SK-N-SH (cell line): ENCODE measurements at regions of chr2 and their contacts with region 1.

Region 1: DNA sequence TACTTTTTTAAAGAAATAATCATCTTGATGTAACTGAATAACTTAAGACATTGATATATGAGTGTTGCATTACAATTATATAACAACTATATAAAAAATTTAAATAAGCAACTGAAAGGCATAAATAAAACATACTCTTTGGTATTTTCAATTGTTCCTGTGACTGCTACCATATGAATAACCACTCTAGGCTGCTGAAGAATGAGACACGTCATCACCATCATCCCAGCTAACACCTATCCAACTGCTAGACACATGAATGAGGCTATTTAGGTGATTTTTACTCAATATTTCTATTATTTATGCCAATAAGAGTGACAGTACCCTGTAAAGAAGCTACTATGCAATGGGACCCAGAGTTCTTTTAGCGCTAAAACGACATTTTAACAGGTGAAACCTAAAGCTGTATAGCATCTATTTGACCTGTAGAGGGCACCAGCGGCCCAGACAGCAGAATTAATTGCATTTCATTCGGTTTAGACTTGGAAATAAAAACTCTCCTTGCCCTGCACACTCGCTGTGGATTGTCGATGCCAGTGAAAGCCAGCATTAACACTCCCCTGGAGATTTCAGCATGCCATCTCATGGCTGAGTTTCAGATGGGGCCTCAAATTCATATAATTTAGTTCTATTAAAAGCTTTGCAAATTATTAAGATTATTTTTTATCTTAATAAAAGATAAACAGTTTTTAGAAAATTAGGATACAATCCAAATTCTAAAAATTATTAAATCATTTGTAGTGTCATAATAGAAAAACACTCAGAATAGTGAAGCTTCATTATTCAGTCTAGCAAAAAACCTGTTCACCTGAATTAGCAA is 89.4 kb upstream of the MAP2 start:
- DNase-seq: peak; percentile 56
- H3K4me3 ChIP-seq: peak overlapping the region in 1 of 2 experiments; percentile 42; a peak in 1 of 4 replicates
- H3K27ac ChIP-seq: no peak overlapping the region
- H3K4me1 ChIP-seq: no peaks in the 10 kb centered on the region
- H3K27me3 ChIP-seq: no peaks in the 10 kb centered on the region
- CTCF ChIP-seq: peak; percentile 94
- EP300 ChIP-seq: no peak
- RAD21 ChIP-seq: peak; percentile 96

Region 2: DNA sequence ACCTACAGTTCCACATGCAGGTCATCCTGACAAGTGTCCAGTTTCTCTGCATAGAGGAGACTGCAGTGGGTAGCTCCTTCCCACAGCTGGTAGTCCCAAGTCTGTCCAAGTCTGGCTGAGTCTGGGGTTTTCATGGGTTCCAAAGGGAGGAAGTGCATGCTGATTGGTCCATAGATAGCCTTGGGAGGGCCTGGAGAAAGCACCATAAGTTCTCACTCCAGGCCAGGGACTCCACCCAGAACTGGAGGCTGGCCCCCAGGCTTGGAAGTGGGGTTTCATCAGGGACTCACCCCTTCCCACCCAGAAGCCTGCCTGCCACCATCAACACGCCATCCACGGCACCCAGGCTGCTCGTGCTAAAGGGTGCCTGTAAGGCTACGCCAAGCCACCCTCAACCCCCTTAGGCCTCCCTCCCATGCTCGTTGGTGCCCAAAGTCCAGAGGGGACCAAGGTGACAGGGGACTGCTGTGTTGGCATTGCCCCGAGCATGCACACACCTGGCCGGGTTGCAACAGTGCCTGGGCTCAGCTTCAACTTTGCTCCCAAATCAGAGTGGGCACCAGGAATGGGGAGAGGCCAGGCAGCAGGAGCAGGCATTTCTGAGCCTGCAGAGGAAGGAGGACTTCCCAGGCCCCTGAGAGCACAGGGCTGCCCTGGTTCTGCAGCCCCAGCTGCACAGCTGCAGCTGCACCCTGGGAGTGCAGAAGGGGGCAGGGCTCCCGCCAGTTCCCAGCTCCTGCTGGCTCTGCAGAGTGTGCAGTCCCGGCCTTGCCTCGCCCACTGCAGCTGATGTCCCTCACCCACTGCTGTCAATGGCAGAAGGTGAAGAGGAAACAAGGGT is 27.0 kb before region 1 on chr2:
- CTCF ChIA-PET with region 1: interaction called, 13 read pairs
- POLR2A ChIA-PET with region 1: no interaction called
- DNase-seq: no peak
- H3K4me3 ChIP-seq: no peak overlapping the region
- H3K27ac ChIP-seq: no peak overlapping the region
- H3K4me1 ChIP-seq: no peaks in the 10 kb centered on the region
- H3K27me3 ChIP-seq: no peaks in the 10 kb centered on the region
- CTCF ChIP-seq: no peak
- EP300 ChIP-seq: no peak
- RAD21 ChIP-seq: no peak

Region 3: DNA sequence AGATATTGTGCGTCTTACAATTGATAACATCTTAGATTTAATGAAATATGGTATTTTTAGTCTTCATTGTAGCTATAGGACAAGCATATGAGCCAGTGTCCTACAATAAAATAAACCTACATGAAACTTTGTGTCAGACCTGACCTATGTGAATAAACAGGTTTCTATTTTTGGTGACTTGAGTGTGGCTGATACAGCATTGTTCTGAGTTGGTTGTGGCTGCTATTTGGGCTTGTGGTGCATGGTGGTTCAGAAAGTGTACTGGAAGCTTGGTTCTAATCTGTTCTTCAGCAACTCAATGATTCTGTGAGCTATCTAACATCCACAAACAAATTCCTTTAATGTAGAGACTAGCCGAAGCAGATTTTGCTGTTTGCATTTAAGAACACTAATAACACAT is 24.6 kb after region 1 on chr2:
- CTCF ChIA-PET with region 1: interaction called, 12 read pairs
- POLR2A ChIA-PET with region 1: no interaction called
- DNase-seq: no peak
- H3K4me3 ChIP-seq: no peak overlapping the region
- H3K27ac ChIP-seq: no peak overlapping the region
- H3K4me1 ChIP-seq: no peaks in the 10 kb centered on the region
- H3K27me3 ChIP-seq: no peaks in the 10 kb centered on the region
- CTCF ChIP-seq: no peak
- EP300 ChIP-seq: no peak
- RAD21 ChIP-seq: no peak

Region 4: DNA sequence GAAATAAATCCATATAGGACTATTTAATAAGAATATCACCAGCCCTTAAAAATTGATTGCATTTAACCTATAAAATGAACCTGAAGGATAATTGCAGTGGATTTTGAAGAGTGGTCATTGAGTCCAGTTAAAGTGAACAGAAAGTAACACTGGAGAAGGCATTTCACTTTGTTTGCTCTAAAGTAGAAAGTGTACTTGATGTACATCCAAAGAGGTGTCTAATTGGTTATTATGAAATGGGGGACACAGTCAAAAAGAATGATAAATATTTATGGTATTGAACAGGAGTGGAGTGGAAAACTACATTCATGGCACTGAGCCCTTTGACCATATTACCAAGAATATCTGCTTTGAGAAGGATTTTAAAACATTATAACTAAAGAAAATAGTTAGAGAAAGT is 61.2 kb after region 1 on chr2:
- CTCF ChIA-PET with region 1: no interaction called
- POLR2A ChIA-PET with region 1: no interaction called
- DNase-seq: no peak
- H3K4me3 ChIP-seq: no peak overlapping the region
- H3K27ac ChIP-seq: no peak overlapping the region
- H3K4me1 ChIP-seq: peaks cover 0 to 13% of the 10 kb centered on the region in 2 experiments; a peak in 1 of 4 replicates
- H3K27me3 ChIP-seq: no peaks in the 10 kb centered on the region
- CTCF ChIP-seq: no peak
- EP300 ChIP-seq: no peak
- RAD21 ChIP-seq: no peak

Region 5: DNA sequence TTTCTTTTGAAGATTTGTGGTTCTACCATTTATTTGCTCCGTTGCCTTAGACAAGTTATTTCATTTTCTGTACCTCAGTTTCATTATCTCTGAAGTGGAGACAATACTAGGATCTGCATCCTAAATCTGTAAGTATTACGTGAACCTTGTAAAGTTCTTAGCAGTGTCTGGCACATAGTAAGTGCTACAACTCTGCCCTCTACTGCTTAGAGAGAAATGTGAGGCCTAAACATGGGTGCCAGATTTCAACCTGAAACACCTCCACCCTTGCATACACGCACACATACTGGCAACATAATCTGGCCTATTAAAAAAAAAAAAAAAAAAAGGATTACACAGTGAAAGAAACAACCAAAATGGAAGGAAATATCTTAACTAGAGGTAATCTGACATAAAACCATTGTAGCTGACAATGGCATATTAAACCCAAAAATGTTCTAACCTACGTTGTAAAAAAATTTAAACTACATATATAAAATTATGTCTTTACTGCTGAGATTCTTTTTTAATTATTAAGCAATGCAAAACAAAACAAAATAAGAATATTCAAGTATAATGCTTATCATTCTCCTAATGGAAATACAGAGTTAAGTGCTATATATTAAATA is 222.1 kb after region 1 on chr2:
- CTCF ChIA-PET with region 1: interaction called, 14 read pairs
- POLR2A ChIA-PET with region 1: no interaction called
- DNase-seq: peak; percentile 27
- H3K4me3 ChIP-seq: no peak overlapping the region
- H3K27ac ChIP-seq: no peak overlapping the region
- H3K4me1 ChIP-seq: no peaks in the 10 kb centered on the region
- H3K27me3 ChIP-seq: no peaks in the 10 kb centered on the region
- CTCF ChIP-seq: peak; percentile 72
- EP300 ChIP-seq: no peak
- RAD21 ChIP-seq: peak; percentile 77

Region 6: DNA sequence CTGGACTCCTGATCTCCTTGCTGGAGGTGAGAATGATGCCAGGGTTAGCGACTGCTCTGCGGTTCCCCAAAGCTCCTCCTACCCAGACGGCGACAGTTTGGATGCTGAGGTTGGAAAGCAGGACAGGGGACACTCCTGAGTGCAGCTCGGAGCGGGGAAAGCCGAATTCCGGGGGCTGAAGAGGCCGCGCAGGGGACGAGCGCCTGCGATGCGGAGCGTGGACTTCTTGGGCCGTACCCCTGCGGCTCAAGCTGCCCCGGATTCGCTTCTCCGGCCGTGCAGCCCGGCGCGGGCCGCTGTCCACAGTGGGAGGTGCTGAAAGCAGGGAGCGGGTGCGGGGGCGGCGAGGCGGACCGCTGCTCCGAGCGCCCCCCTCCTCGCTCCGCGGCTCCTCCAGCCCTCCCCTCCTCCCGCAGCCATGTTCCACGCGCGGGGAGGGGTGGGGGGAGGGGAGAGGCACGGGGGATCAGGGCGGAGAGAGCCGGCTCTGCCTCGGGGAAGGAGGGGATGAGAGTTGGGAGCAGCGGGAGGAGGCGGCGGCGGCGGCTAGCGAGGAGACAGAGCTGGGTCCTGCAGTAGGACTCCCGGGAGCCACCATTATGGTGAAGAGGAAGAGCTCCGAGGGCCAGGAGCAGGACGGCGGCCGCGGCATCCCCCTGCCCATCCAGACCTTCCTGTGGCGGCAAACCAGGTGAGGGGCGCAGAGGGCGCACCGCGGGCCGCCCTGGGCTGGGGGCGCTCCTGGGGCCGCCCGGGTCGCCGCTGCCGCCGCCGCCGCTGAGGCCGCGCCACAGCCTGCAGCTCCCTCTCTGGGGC is 437.3 kb after region 1 on chr2 and contains the start of gene UNC80:
- CTCF ChIA-PET with region 1: interaction called, 11 read pairs
- POLR2A ChIA-PET with region 1: no interaction called
- DNase-seq: peak; percentile 95
- H3K4me3 ChIP-seq: peak within 1 kb of the TSS; percentile 60 to 63
- H3K27ac ChIP-seq: peak within 1 kb of the TSS in 1 of 2 experiments; percentile 85; a peak in 2 of 4 replicates
- H3K4me1 ChIP-seq: peaks cover 0 to 5% of the 10 kb centered on the region in 2 experiments; a peak in 2 of 4 replicates
- H3K27me3 ChIP-seq: no peaks in the 10 kb centered on the region; the same call in 1 of the 2 replicates
- CTCF ChIP-seq: no peak
- EP300 ChIP-seq: no peak
- RAD21 ChIP-seq: peak; percentile 16; the same call in 1 of the 2 replicates
- polyA plus RNA-seq, gene UNC80: 0.59 and 1.3 TPM in 2 replicates